Activated T-helper 2 cell treated with anti-CD3 and anti-CD28 coated beads, Interferon-gamma antibody, Interleukin-2, Interleukin-4, amounts not matched to agents 10 μg/mL and 5 μg/mL and 100 μg/mL, durations not matched to agents 14 hours and 24 hours and 36 hours (primary cell): ENCODE measurements at regions of chr22 and their contacts with region 1.

Region 1: DNA sequence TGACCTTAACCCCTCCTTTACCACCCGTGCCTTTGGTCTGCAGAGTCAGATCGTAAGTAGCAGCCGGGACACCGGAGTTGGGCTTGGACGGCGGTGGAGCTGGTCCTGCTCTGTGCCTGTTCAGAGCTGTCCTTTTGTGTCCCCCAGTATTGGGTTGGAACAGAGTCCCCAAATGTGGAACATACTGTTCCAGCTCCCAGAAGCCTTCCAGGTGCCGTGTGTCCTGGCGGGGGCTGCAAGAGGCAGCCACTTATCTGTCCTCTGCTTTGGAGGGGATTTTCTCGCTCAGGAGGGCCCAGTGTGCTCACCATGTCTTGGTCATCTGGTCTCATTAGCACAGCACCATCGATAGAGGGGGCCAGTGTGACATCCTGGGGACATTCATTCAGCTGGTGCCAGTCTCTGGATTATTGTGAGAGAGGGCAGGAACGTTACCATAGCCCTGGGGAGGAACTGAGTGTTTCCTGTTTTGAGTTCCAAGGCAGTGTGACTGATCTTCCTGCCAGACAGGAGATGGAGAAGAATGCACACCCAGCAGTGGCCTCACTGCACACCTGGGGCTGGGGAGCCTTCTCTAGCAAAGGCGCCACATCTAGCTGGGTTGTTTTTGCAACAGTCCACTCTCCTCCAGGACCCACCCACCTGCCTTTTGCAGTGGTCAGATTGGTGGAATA is 12.4 kb downstream of the CRELD2 start:
- DNase-seq: no peak
- H3K4me3 Mint-ChIP-seq: no peak overlapping the region
- H3K27ac Mint-ChIP-seq: peak overlapping the region; percentile 31
- H3K4me1 Mint-ChIP-seq: peaks cover 21% of the 10 kb centered on the region
- H3K27me3 Mint-ChIP-seq: no peaks in the 10 kb centered on the region

Region 2: GRCh38 chr22:49767355-49768062 is 163.4 kb before region 1 on chr22:
- intact Hi-C with region 1: loop called (anchors 1 kb)
- DNase-seq: no peak
- H3K4me3 Mint-ChIP-seq: no peak overlapping the region
- H3K27ac Mint-ChIP-seq: no peak overlapping the region
- H3K4me1 Mint-ChIP-seq: peaks cover 5% of the 10 kb centered on the region
- H3K27me3 Mint-ChIP-seq: no peaks in the 10 kb centered on the region

Region 3: DNA sequence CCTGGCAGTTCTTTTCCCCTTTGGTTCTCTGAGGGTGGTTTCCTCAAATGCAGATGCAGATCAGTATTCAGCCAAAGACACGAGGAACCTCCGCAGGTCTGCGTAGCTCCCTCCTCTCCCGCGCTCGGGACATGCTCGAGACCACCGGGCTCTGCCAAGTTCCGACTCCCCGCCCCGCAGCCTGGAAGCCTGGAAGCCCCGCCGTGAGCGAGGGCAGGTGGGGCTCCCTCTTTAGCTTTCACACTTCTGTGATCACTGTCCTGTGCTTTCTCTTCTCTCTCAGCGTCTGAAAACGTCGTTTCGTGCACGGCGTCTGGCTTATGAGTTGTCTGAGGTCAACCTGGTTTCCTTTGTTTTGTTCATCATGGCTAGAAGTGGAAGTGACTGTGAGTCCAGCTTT is 50.6 kb before region 1 on chr22:
- intact Hi-C with region 1: no loop called
- DNase-seq: peak; percentile 31
- H3K4me3 Mint-ChIP-seq: peak overlapping the region; percentile 62
- H3K27ac Mint-ChIP-seq: peak overlapping the region; percentile 81
- H3K4me1 Mint-ChIP-seq: peaks cover 40% of the 10 kb centered on the region
- H3K27me3 Mint-ChIP-seq: no peaks in the 10 kb centered on the region

Region 4: DNA sequence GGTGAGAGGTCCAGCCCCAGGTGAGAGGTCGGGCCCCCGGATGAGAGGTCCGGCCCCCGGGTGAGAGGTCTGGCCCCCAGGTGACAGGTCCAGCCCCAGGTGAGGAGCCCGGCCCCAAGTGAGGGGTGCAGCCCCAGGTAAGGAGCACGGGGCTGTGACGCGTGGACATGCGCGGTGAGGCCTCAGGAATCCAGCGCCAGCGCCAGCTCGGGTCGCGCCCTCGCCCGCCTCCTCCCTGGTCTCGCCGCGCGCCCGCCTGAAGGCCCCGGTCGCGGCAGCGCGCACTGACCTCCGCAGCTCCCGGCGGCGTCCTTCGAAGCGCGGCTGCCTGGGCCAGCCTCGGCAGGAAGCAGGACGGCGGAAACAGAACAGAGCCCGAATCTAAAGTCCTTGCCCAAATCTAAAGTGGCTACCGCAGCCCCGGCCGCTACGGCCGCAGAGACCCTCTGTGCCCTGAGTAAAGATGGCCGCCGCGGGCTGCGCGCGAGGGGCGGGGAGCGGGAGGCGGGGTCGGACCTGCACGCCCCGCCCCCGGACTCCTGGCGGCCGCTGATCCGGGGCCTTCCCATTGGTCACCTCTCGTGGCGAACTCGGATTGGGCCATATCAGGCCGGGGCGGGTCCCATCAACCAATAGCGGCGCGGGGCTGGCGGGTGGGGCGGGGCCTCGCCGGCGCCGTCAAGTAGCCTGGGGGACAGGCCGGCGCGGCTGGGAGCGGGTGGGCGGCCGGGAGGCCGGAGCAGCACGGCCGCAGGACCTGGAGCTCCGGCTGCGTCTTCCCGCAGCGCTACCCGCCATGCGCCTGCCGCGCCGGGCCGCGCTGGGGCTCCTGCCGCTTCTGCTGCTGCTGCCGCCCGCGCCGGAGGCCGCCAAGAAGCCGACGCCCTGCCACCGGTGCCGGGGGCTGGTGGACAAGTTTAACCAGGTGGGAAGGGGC is 12.6 kb before region 1 on chr22 and contains the starts of genes ALG12 and CRELD2:
- intact Hi-C with region 1: no loop called
- DNase-seq: peak; percentile 95
- H3K4me3 Mint-ChIP-seq: peak within 1 kb of the TSS; percentile 87
- H3K27ac Mint-ChIP-seq: peak within 1 kb of the TSS; percentile 83
- H3K4me1 Mint-ChIP-seq: peaks cover 17% of the 10 kb centered on the region
- H3K27me3 Mint-ChIP-seq: no peaks in the 10 kb centered on the region
- total RNA-seq, gene ALG12: 15.5 and 16.5 TPM in 2 replicates
- total RNA-seq, gene CRELD2: 49.9 and 52.9 TPM in 2 replicates

Region 5: DNA sequence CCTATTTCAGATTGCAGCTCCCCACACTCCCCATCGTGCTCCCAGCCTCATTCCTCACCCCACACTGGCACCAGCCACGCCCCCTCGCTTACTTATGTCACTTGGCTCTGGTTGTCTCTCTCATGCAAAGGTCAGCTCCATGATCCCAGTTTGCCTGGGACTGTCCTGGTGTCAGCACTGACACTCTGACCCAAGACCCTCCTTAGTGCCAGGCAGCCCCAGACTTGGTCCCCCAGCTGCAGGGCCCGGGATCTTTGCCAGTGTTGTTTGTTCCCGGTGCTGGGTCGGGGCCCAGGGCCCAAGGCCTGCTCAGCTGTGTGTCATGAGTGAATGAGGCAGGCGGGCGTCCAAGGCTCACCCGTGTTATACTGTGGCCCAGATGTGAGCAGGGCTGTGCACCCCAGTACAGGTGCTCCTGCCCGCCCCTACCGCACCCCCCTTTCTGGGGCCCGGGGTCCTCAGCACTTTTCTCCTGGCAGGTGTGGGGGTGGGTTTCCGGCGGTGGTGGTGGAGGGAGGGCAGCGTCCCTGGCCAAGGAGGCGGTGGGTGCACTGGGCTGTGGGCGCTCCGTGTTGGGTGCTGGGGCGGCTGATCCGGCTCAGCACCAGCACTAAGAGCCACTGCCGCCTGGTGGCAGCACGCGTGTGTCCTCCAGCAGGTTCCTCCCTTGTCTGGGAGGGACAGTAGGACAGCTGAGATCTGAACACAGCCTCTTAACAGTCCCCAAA is 62.2 kb after region 1 on chr22:
- intact Hi-C with region 1: loop called (anchors 1 kb)
- DNase-seq: peak; percentile 49
- H3K4me3 Mint-ChIP-seq: no peak overlapping the region
- H3K27ac Mint-ChIP-seq: no peak overlapping the region
- H3K4me1 Mint-ChIP-seq: peaks cover 3% of the 10 kb centered on the region
- H3K27me3 Mint-ChIP-seq: peaks cover 7% of the 10 kb centered on the region

Region 6: GRCh38 chr22:50016988-50017700 is 86.3 kb after region 1 on chr22:
- intact Hi-C with region 1: loop called (anchors 5 kb)
- DNase-seq: no peak
- H3K4me3 Mint-ChIP-seq: no peak overlapping the region
- H3K27ac Mint-ChIP-seq: peak overlapping the region; percentile 52
- H3K4me1 Mint-ChIP-seq: peaks cover 25% of the 10 kb centered on the region
- H3K27me3 Mint-ChIP-seq: peaks cover 3% of the 10 kb centered on the region

Region 7: DNA sequence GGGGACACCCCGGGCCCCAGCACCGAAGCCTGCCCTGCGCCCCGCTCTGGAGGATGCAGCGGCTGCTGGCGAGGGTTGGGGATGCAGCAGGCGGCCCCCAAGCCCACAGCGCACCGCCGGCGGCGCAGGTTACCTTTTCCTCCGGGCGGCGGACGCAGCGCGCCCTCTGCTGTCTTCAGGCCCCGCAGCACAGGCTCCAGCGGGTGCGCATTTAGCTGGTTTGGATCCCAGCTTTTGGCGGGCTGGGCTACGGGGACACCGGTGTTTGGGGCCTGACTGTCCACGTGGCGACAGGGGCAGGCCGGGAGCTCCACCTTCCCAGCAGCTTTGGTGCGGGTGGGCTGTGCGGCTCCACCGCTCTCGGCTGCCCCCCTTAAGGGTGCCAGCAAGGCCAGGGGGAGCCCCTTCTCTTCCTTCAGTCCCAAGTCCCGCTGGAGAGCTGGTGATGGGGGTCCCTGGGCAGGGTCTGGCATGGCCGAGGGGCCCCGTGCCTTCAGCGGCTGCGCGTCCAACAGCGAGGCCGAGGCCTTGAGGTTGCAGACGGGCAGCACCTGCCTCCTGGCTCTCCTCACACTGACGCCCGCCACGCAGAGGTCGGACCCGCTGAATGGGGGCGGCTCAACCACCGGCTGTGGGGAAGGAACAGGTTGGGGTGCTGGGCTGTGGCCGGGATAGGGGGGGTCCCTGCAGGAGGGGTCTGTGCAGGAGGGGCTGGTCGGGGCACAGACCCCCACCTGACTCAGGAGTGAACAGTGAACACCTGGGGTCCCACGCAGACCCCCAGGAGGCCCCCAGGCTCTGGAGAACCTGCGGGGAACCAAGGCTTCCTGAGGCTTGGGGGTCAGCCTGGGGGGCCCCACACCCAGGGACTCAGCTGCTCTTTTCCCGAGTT is 99.7 kb after region 1 on chr22:
- intact Hi-C with region 1: loop called (anchors 1 kb)
- DNase-seq: peak; percentile 71
- H3K4me3 Mint-ChIP-seq: no peak overlapping the region
- H3K27ac Mint-ChIP-seq: no peak overlapping the region
- H3K4me1 Mint-ChIP-seq: peaks cover 9% of the 10 kb centered on the region
- H3K27me3 Mint-ChIP-seq: peaks cover 4% of the 10 kb centered on the region

Region 8: DNA sequence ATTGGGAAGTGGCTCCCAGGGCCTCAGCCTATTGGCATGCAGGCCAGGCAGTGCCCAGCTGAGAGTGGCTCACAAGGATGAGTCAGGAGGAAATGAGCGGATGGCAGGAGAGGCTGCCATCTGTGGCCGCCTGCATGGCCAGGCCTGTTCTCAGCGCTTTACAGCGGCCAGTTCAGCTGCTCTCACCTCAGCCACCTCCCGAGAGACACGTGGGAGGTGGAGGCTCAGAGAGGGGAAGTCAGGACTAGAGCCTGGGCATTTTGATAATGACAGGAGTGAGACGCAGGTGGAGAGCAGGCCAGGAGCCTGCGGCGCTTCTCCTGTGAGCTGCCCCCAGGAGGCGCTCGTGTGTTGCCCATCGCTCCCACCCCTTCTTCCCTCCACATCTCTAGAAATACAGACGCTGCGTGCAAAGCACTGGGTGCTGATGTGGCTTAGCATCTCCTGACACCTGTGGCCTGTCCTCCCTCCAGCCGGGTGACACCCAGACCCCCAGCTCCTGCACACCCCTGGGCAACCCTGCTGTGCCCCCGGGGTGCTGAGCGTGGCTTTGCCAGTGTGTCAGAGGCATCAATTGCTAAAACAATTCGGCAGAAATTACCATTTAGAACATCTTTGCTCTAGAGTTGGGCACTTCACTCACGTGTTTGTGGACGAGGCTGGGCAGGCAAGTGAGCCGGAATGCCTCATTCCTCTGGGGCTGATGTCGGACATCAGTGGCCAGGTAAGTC is 218.3 kb after region 1 on chr22:
- intact Hi-C with region 1: loop called (anchors 5 kb)
- DNase-seq: peak; percentile 67
- H3K4me3 Mint-ChIP-seq: no peak overlapping the region
- H3K27ac Mint-ChIP-seq: no peak overlapping the region
- H3K4me1 Mint-ChIP-seq: peaks cover 2% of the 10 kb centered on the region
- H3K27me3 Mint-ChIP-seq: no peaks in the 10 kb centered on the region

Region 9: GRCh38 chr22:50185384-50186087 is 254.7 kb after region 1 on chr22 and contains the start of gene TRABD:
- intact Hi-C with region 1: loop called (anchors 5 kb)
- DNase-seq: peak; percentile 81
- H3K4me3 Mint-ChIP-seq: peak within 1 kb of the TSS; percentile 92
- H3K27ac Mint-ChIP-seq: peak within 1 kb of the TSS; percentile 91
- H3K4me1 Mint-ChIP-seq: peaks cover 17% of the 10 kb centered on the region
- H3K27me3 Mint-ChIP-seq: peaks cover 2% of the 10 kb centered on the region
- total RNA-seq, gene TRABD: 104 and 109 TPM in 2 replicates